CD4-positive, alpha-beta memory T cell (primary cell): ENCODE measurements at regions of chr9 and their contacts with region 1.

Region 1: GRCh38 chr9:95510709-95511615 is 5.8 kb downstream of the PTCH1 start:
- DNase-seq: peak; percentile 80 to 83 (median 81)
- H3K4me3 ChIP-seq: peak overlapping the region; percentile 42 to 46
- H3K4me3 Mint-ChIP-seq: peak overlapping the region; percentile 89 to 99 (median 94)
- H3K27ac ChIP-seq: peak overlapping the region; percentile 4
- H3K27ac Mint-ChIP-seq: peak overlapping the region; percentile 87 to 96 (median 94)
- H3K4me1 ChIP-seq: peaks cover 40% of the 10 kb centered on the region
- H3K4me1 Mint-ChIP-seq: peaks cover 21 to 73% (median 31%) of the 10 kb centered on the region in 4 donors
- H3K27me3 ChIP-seq: peaks cover 4% of the 10 kb centered on the region
- H3K27me3 Mint-ChIP-seq: peaks cover 7 to 13% of the 10 kb centered on the region in 2 donors

Region 2: GRCh38 chr9:95317119-95317892 is 193.7 kb before region 1 on chr9 and contains the start of gene FANCC:
- CTCF ChIA-PET with region 1: no interaction called
- POLR2A ChIA-PET with region 1: no interaction called
- intact Hi-C with region 1: loop called (anchors 2 kb)
- DNase-seq: peak; percentile 77 to 82 (median 80)
- H3K4me3 ChIP-seq: peak within 1 kb of the TSS; percentile 55 to 76
- H3K4me3 Mint-ChIP-seq: peak within 1 kb of the TSS; percentile 91 to 98 (median 93)
- H3K27ac ChIP-seq: peak within 1 kb of the TSS; percentile 67
- H3K27ac Mint-ChIP-seq: peak within 1 kb of the TSS; percentile 87 to 95 (median 89)
- H3K4me1 ChIP-seq: peaks cover 15% of the 10 kb centered on the region
- H3K4me1 Mint-ChIP-seq: peaks cover 7 to 21% (median 14%) of the 10 kb centered on the region in 4 donors
- H3K27me3 ChIP-seq: no peaks in the 10 kb centered on the region
- H3K27me3 Mint-ChIP-seq: peaks cover 0 to 3% of the 10 kb centered on the region in 2 donors
- total RNA-seq, gene FANCC: 4.4 to 4.9 TPM

Region 3: GRCh38 chr9:95462249-95463147 is 48.5 kb before region 1 on chr9:
- CTCF ChIA-PET with region 1: interaction called, 3 read pairs
- POLR2A ChIA-PET with region 1: interaction called, 14 read pairs
- intact Hi-C with region 1: loop called (anchors 1 kb)
- DNase-seq: peak; percentile 87 to 91 (median 88)
- H3K4me3 ChIP-seq: peak overlapping the region; percentile 5 to 40
- H3K4me3 Mint-ChIP-seq: peak overlapping the region; percentile 83 to 90 (median 88)
- H3K27ac ChIP-seq: peak overlapping the region; percentile 22
- H3K27ac Mint-ChIP-seq: peak overlapping the region; percentile 74 to 96 (median 87)
- H3K4me1 ChIP-seq: peaks cover 26% of the 10 kb centered on the region
- H3K4me1 Mint-ChIP-seq: peaks cover 27 to 60% (median 42%) of the 10 kb centered on the region in 4 donors
- H3K27me3 ChIP-seq: no peaks in the 10 kb centered on the region
- H3K27me3 Mint-ChIP-seq: peaks cover 0 to 2% of the 10 kb centered on the region in 2 donors

Region 4: GRCh38 chr9:95494416-95495371 is 16.3 kb before region 1 on chr9:
- CTCF ChIA-PET with region 1: interaction called, 3 read pairs
- POLR2A ChIA-PET with region 1: interaction called, 82 read pairs
- intact Hi-C with region 1: loop called (anchors 1 kb)
- DNase-seq: peak; percentile 87 to 94 (median 90)
- H3K4me3 ChIP-seq: peak overlapping the region in 1 of 2 donors; percentile 48
- H3K4me3 Mint-ChIP-seq: peak overlapping the region; percentile 82 to 93 (median 90)
- H3K27ac ChIP-seq: peak overlapping the region; percentile 64
- H3K27ac Mint-ChIP-seq: peak overlapping the region; percentile 88 to 100 (median 98)
- H3K4me1 ChIP-seq: peaks cover 65% of the 10 kb centered on the region
- H3K4me1 Mint-ChIP-seq: peaks cover 28 to 86% (median 59%) of the 10 kb centered on the region in 4 donors
- H3K27me3 ChIP-seq: no peaks in the 10 kb centered on the region
- H3K27me3 Mint-ChIP-seq: peaks cover 1 to 4% of the 10 kb centered on the region in 2 donors

Region 5: GRCh38 chr9:95556521-95556920 is 45.6 kb after region 1 on chr9:
- CTCF ChIA-PET with region 1: no interaction called
- POLR2A ChIA-PET with region 1: no interaction called
- intact Hi-C with region 1: no loop called
- DNase-seq: no peak
- H3K4me3 ChIP-seq: no peak overlapping the region
- H3K4me3 Mint-ChIP-seq: no peak overlapping the region
- H3K27ac ChIP-seq: no peak overlapping the region
- H3K27ac Mint-ChIP-seq: no peak overlapping the region
- H3K4me1 ChIP-seq: no peaks in the 10 kb centered on the region
- H3K4me1 Mint-ChIP-seq: peaks cover 0 to 4% (median 1%) of the 10 kb centered on the region in 4 donors
- H3K27me3 ChIP-seq: peaks cover 5% of the 10 kb centered on the region
- H3K27me3 Mint-ChIP-seq: peaks cover 18 to 27% of the 10 kb centered on the region in 2 donors

Region 6: DNA sequence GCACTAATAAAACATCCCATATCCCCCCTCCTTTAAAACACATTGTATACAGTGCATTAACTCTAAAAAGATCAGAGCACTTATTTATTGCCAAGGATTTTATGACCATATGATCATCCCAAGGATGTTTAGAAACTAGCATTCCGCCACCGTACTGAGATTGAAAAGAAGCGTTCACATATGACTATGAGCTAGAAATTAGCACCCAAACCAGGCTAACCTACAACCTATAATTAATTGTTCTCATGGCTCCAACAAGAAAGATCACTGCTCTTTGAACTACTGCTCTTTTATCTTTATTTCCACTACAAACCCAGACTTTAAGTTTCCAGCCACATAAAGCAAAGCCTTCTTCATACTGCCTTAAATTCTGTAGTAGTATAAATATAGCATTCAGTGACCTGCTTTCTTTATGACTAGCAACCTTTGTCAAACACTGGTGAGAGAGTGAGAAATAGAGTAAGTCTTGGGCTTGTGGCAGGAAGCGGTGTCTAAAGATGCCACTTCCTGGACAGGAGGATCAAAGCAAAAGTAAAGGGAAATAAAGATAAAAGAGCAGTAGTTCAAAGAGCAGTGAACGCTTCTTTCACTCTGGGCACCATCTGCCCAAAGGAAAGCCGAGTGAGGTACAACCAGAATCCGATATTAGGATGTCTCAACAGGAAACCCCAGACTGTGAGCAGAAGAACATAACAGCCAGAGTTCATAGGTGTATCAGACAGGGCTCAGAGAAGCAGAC is 213.5 kb after region 1 on chr9:
- CTCF ChIA-PET with region 1: no interaction called
- POLR2A ChIA-PET with region 1: no interaction called
- intact Hi-C with region 1: loop called (anchors 1 kb)
- DNase-seq: peak; percentile 84 to 93 (median 89)
- H3K4me3 ChIP-seq: no peak overlapping the region
- H3K4me3 Mint-ChIP-seq: peak overlapping the region; percentile 8 to 73 (median 40)
- H3K27ac ChIP-seq: no peak overlapping the region
- H3K27ac Mint-ChIP-seq: peak overlapping the region; percentile 69 to 92 (median 88)
- H3K4me1 ChIP-seq: peaks cover 34% of the 10 kb centered on the region
- H3K4me1 Mint-ChIP-seq: peaks cover 29 to 49% (median 33%) of the 10 kb centered on the region in 4 donors
- H3K27me3 ChIP-seq: no peaks in the 10 kb centered on the region
- H3K27me3 Mint-ChIP-seq: peaks cover 0 to 2% of the 10 kb centered on the region in 2 donors

Region 7: DNA sequence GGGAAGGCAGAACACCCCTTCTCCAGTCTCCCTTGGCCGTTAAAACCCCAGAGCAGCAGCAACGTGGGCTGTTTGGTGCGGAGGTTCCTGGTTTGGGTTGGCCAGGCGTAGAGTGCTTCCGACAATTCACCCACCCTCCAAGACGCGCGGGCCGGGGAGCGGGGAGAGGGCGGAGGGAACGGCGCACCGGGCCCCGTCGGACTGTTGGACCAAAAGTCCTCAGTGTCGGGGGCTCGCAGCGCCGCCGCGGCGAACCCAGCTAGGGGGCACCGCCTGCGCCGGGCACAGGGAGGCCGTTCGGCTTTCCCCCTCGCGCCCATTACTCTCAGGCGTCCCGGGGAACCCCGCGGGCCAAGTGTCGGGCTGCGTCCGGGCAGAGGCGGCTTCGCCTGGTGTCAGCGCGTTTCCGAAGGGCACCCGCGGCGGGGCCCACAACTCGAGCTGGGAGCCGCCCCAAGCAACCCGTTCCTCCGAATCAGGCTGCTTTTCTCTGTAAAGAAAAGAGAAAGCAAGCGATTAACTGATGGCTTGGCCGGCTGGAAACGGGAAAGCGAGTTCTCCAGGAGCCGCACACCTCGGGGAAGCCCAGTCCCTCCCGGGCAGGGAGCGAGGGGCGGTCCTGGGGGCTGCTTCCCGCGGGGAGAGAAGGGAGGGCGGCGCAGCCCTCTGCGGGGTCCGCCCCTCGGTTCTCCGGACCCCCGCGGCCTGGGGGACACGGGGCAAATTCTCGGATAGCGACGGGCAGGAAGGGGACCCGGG is 510.0 kb after region 1 on chr9:
- CTCF ChIA-PET with region 1: no interaction called
- POLR2A ChIA-PET with region 1: no interaction called
- intact Hi-C with region 1: loop called (anchors 5 kb)
- DNase-seq: peak in 4 of 5 donors; percentile 43 to 55 (median 48)
- H3K4me3 ChIP-seq: peak overlapping the region in 1 of 2 donors; percentile 52
- H3K4me3 Mint-ChIP-seq: peak overlapping the region; percentile 81 to 93 (median 86)
- H3K27ac ChIP-seq: peak overlapping the region; percentile 58
- H3K27ac Mint-ChIP-seq: peak overlapping the region; percentile 72 to 95 (median 86)
- H3K4me1 ChIP-seq: peaks cover 56% of the 10 kb centered on the region
- H3K4me1 Mint-ChIP-seq: peaks cover 44 to 85% (median 60%) of the 10 kb centered on the region in 4 donors
- H3K27me3 ChIP-seq: no peaks in the 10 kb centered on the region
- H3K27me3 Mint-ChIP-seq: peaks cover 0 to 6% of the 10 kb centered on the region in 2 donors